ENCODE measurements at regions of chr15 and their contacts with region 1.

Region 1: DNA sequence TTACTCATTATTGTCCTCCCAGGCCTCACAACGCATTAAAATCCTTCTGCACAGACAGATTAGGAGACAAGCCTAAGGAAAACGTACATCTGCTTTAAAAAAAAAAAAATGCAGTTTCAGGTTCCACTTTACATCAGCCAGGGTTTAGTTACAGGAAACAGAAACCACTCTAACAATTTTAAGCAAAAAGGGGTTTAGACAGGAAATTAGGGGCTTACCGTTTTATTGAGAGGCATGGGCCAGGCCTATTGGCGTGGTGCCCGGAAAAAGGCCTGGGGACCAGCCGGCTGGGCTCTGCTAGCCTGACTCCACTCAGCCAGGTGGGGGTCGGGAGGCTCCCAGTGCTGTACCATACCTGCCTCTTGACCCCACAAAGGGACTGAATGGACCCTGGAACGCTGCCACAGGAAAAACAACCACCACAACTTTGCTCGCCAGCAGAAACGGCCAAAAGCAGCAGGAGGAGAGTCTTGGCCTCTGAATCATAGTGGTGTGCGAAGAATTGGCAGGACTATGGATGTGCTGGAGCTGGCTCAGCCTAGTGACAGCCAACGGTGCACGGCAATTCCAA is 124.3 kb downstream of the CHSY1 start:
- DNase-seq: peak; percentile 71
- ATAC-seq: peak; percentile 78
- H3K4me3 Mint-ChIP-seq: peak overlapping the region; percentile 83
- H3K27ac Mint-ChIP-seq: peak overlapping the region; percentile 98
- H3K4me1 Mint-ChIP-seq: peaks cover 59% of the 10 kb centered on the region
- H3K27me3 Mint-ChIP-seq: no peaks in the 10 kb centered on the region

Region 2: DNA sequence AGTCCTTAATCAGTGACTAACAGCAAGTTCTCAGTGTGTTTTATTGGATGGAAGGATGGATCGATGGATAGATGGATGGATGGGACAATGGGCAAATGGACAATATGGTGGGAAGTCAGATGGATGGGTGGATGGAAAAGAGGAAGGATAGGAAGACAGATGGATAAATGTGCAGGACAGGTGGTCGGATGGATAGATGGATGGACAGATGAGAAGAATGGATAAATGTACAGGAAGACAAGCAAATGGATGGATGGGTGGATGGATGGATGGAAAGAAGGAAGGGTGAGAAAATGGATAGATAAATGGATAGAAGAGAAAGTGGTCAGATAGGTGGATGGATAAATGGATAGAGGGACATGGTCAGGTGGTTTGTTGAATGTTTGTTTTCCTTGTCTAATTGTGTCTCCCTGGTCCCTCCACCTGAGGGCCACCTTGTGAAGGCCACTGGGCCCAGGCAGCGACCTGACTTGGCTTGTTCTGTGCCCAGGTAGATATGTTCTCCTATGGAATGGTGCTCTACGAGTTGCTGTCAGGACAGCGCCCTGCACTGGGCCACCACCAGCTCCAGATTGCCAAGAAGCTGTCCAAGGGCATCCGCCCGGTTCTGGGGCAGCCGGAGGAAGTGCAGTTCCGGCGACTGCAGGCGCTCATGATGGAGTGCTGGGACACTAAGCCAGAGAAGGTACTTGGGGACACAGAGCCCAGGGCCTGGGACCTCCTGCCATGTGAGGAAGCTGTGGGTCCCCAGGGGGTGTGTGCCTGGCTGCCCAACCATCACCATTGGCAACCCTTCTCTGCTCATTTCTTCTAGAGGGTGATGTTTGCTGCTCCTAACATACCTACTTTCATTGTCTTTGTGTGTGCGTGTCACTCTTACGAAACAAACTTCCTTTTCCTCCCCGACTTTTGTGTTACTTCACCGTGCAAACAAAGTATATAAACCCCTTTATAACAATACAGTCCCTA is 70.9 kb before region 1 on chr15:
- POLR2A ChIA-PET with region 1: no interaction called
- DNase-seq: no peak
- ATAC-seq: no peak
- H3K4me3 Mint-ChIP-seq: no peak overlapping the region
- H3K27ac Mint-ChIP-seq: no peak overlapping the region
- H3K4me1 Mint-ChIP-seq: peaks cover 3% of the 10 kb centered on the region
- H3K27me3 Mint-ChIP-seq: peaks cover 5% of the 10 kb centered on the region

Region 3: DNA sequence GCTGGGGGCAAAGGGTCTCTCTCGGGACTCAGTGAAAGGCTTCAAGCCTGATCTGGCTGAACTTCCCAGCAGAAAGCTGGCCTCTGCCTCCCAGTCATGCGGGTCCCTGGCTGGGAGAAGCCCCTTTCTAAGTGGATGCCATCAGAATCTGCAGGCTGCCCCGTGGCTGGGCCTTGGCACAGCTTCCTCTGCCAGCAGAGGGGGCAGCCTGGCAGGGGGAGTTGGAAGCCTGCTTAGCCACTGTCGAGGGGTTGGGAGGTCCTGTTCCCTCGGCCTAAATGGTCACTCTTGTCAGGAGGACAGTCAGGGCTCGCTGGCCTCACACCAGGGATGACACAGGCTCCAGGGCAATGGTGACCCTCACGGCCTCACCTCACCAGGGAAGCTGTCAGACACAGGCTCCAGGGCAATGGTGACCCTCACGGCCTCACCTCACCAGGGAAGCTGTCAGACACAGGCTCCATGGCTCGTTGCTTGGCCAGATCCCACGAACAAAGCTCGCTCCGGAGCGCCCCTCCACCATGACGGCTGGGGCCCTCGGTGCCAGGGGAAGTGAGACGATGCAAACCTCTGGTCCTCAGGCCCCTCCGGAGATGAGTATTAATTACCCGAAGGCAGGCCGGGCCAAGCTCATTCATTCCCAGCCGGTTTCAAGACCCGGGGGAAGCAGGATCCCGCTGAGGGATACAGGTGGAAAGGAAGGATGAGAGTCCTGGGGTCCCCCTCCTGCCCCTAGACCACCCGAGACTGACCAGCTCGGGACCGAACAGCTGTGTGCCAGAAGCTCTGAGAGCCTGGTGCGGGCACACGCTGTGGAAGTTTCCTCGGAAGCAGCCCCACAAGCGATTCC is 26.8 kb before region 1 on chr15:
- POLR2A ChIA-PET with region 1: no interaction called
- DNase-seq: no peak
- ATAC-seq: no peak
- H3K4me3 Mint-ChIP-seq: no peak overlapping the region
- H3K27ac Mint-ChIP-seq: no peak overlapping the region
- H3K4me1 Mint-ChIP-seq: peaks cover 6% of the 10 kb centered on the region
- H3K27me3 Mint-ChIP-seq: peaks cover 7% of the 10 kb centered on the region

Region 4: DNA sequence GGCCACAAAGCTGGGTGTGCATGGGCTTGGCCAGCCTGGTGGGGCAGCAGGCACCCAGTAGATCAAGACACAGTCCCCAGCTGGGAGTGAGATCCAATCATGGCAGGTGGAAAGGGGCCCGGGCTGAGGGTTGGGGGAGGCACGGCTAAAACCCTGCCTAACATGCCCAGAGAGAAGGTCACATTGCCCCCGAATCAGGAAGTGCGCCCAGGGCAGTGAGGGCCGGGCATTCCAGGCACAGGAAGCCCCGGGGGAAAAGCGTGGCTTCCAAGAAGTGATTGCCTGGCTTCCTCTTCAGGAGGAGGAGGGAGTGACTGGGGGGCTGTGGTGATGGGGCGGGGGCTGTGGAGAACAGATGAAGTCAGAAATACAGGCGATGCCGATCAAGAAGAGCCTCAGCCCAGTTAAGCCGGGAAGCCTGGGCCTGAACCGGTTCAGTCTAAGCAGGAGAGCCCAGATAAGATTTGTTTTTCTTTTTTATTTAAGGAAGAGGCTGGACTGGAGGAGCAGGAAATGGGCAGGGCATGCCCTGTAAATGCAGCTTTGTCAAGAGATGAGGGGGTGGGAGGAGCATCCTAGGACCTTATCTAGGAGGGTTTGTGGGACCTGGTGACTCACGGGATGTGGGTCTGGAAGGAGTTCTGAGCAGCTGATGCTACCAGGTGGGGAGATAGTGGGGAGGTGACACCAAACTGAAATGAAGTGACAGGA is 40.3 kb after region 1 on chr15:
- POLR2A ChIA-PET with region 1: interaction called, 12 read pairs
- DNase-seq: peak; percentile 63
- ATAC-seq: peak; percentile 98
- H3K4me3 Mint-ChIP-seq: peak overlapping the region; percentile 79
- H3K27ac Mint-ChIP-seq: peak overlapping the region; percentile 95
- H3K4me1 Mint-ChIP-seq: peaks cover 31% of the 10 kb centered on the region
- H3K27me3 Mint-ChIP-seq: no peaks in the 10 kb centered on the region

Region 5: GRCh38 chr15:101242160-101242998 is 114.8 kb after region 1 on chr15:
- POLR2A ChIA-PET with region 1: interaction called, 14 read pairs
- DNase-seq: peak; percentile 70
- ATAC-seq: peak; percentile 83
- H3K4me3 Mint-ChIP-seq: peak overlapping the region; percentile 78
- H3K27ac Mint-ChIP-seq: peak overlapping the region; percentile 85
- H3K4me1 Mint-ChIP-seq: peaks cover 80% of the 10 kb centered on the region
- H3K27me3 Mint-ChIP-seq: no peaks in the 10 kb centered on the region